HCT116 (cell line): ENCODE measurements at regions of chr7 and their contacts with region 1.

Region 1: DNA sequence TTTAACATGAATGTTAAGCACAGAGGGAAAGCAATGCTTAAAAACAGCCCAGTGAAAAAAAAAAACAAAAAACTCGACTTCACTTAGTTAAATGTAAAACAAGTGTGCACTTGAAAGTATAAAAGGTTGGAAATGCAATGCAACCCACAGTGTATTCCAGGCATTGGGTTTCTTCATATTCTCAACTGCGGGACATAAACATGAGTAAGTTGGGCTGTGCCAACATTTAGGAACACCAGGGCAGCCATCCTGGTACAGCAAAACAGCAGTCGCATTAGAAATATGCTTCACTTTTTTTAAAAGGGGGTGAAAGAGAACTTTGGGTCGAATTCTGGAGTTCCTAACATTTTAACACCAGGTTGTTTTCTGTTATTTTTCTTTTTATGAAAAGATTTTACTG is 937 bp downstream of the STEAP1 start:
- DNase-seq: no peak
- ATAC-seq: no peak
- H3K4me3 ChIP-seq: peak overlapping the region; percentile 63 to 75
- H3K27ac ChIP-seq: no peak overlapping the region
- H3K4me1 ChIP-seq: peaks cover 0 to 38% of the 10 kb centered on the region in 2 experiments; a peak in 2 of 4 replicates
- H3K27me3 ChIP-seq: no peaks in the 10 kb centered on the region
- CTCF ChIP-seq: no peak
- POLR2A ChIP-seq: no peak
- RAD21 ChIP-seq: no peak

Region 2: DNA sequence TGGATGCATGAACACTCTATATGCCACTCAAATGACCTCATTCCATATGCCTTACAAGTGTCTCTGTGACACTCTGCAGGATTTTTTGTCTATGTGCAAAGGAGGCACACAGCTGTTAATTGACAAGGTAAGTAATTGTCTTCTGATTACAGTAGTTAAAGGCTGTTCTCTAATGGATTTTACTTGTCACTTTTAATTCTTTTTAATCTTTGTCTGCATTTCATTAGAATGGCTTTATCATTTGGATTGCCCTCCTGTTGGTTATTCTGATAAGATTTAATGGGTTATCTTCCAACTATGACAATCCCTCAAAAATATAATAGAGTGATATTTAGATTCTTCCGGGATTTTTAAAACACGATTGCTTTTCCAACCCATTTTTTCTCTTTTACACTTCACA is 1069.6 kb before region 1 on chr7:
- CTCF ChIA-PET with region 1: no interaction called
- POLR2A ChIA-PET with region 1: no interaction called
- RAD21 ChIA-PET with region 1: no interaction called
- intact Hi-C with region 1: no loop called
- DNase-seq: no peak
- ATAC-seq: no peak
- H3K4me3 ChIP-seq: no peak overlapping the region
- H3K27ac ChIP-seq: no peak overlapping the region
- H3K4me1 ChIP-seq: no peaks in the 10 kb centered on the region
- H3K27me3 ChIP-seq: no peaks in the 10 kb centered on the region
- CTCF ChIP-seq: no peak
- POLR2A ChIP-seq: no peak
- RAD21 ChIP-seq: no peak

Region 3: GRCh38 chr7:90211391-90212148 is 56.4 kb after region 1 on chr7 and contains the start of gene STEAP2:
- CTCF ChIA-PET with region 1: interaction called, 9 read pairs
- POLR2A ChIA-PET with region 1: interaction called, 3 read pairs
- RAD21 ChIA-PET with region 1: interaction called in 1 of 2 experiments, 3 read pairs
- intact Hi-C with region 1: loop called (anchors 5 kb)
- DNase-seq: peak; percentile 82
- ATAC-seq: peak; percentile 95
- H3K4me3 ChIP-seq: peak within 1 kb of the TSS; percentile 69 to 85
- H3K27ac ChIP-seq: peak within 1 kb of the TSS; percentile 88
- H3K4me1 ChIP-seq: peaks cover 9 to 22% of the 10 kb centered on the region in 2 experiments
- H3K27me3 ChIP-seq: no peaks in the 10 kb centered on the region
- CTCF ChIP-seq: peak in 2 of 3 experiments; percentile 63 to 69; a peak in 4 of 6 replicates
- POLR2A ChIP-seq: no peak
- RAD21 ChIP-seq: peak; percentile 34; the same call in 1 of the 2 replicates
- total RNA-seq, gene STEAP2: 13.4 TPM

Region 4: GRCh38 chr7:90262438-90262837 is 107.2 kb after region 1 on chr7:
- CTCF ChIA-PET with region 1: interaction called, 6 read pairs
- POLR2A ChIA-PET with region 1: no interaction called
- RAD21 ChIA-PET with region 1: no interaction called
- intact Hi-C with region 1: loop called (anchors 1 kb)
- DNase-seq: peak; percentile 15
- ATAC-seq: peak; percentile 79
- H3K4me3 ChIP-seq: no peak overlapping the region
- H3K27ac ChIP-seq: no peak overlapping the region
- H3K4me1 ChIP-seq: no peaks in the 10 kb centered on the region
- H3K27me3 ChIP-seq: no peaks in the 10 kb centered on the region
- CTCF ChIP-seq: peak; percentile 35 to 85 (median 50); a peak in 5 of 6 replicates
- POLR2A ChIP-seq: no peak
- RAD21 ChIP-seq: peak; percentile 84

Region 5: GRCh38 chr7:90298145-90299038 is 143.2 kb after region 1 on chr7:
- CTCF ChIA-PET with region 1: interaction called, 6 read pairs
- POLR2A ChIA-PET with region 1: no interaction called
- RAD21 ChIA-PET with region 1: no interaction called
- intact Hi-C with region 1: loop called (anchors 1 kb)
- DNase-seq: peak; percentile 29
- ATAC-seq: peak; percentile 99
- H3K4me3 ChIP-seq: no peak overlapping the region
- H3K27ac ChIP-seq: no peak overlapping the region
- H3K4me1 ChIP-seq: no peaks in the 10 kb centered on the region
- H3K27me3 ChIP-seq: no peaks in the 10 kb centered on the region
- CTCF ChIP-seq: peak; percentile 49 to 68 (median 67); a peak in 5 of 6 replicates
- POLR2A ChIP-seq: no peak
- RAD21 ChIP-seq: peak; percentile 55; the same call in 1 of the 2 replicates

Region 6: DNA sequence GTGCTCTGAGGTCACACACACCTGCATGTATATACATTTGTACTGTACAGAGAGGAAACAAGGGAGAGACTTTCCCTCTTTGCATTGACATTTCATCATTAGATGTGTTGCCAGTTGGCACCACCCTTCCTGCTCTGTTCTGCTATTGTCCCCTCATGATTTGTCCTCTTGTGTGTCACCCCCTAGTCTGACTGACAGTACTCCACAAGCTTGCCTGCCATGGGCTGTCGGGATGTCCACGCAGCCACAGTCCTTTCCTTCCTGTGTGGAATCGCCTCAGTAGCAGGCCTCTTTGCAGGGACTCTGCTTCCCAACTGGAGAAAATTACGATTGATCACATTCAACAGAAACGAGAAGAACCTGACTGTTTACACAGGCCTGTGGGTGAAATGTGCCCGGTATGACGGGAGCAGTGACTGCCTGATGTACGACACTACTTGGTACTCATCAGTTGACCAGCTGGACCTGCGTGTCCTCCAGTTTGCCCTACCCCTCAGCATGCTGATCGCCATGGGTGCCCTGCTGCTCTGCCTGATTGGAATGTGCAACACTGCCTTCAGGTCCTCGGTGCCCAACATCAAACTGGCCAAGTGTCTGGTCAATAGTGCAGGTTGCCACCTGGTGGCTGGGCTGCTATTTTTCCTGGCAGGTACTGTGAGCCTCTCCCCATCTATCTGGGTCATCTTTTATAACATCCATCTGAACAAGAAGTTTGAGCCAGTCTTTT is 257.4 kb after region 1 on chr7:
- CTCF ChIA-PET with region 1: interaction called, 5 read pairs
- POLR2A ChIA-PET with region 1: no interaction called
- RAD21 ChIA-PET with region 1: no interaction called
- intact Hi-C with region 1: loop called (anchors 1 kb)
- DNase-seq: peak; percentile 15
- ATAC-seq: peak; percentile 90
- H3K4me3 ChIP-seq: no peak overlapping the region
- H3K27ac ChIP-seq: no peak overlapping the region
- H3K4me1 ChIP-seq: peaks cover 0 to 13% of the 10 kb centered on the region in 2 experiments; a peak in 2 of 4 replicates
- H3K27me3 ChIP-seq: no peaks in the 10 kb centered on the region
- CTCF ChIP-seq: peak; percentile 47 to 63 (median 62); a peak in 5 of 6 replicates
- POLR2A ChIP-seq: no peak
- RAD21 ChIP-seq: peak; percentile 57

Region 7: GRCh38 chr7:90424720-90425119 is 269.5 kb after region 1 on chr7:
- CTCF ChIA-PET with region 1: interaction called, 58 read pairs
- POLR2A ChIA-PET with region 1: no interaction called
- RAD21 ChIA-PET with region 1: interaction called, 7 to 8 read pairs
- intact Hi-C with region 1: loop called (anchors 1 kb)
- DNase-seq: no peak
- ATAC-seq: no peak
- H3K4me3 ChIP-seq: no peak overlapping the region
- H3K27ac ChIP-seq: no peak overlapping the region
- H3K4me1 ChIP-seq: peaks cover 0 to 5% of the 10 kb centered on the region in 2 experiments; a peak in 1 of 4 replicates
- H3K27me3 ChIP-seq: no peaks in the 10 kb centered on the region
- CTCF ChIP-seq: no peak
- POLR2A ChIP-seq: no peak
- RAD21 ChIP-seq: no peak